WTC11 (cell line): ENCODE measurements at regions of chr5 and their contacts with region 1.

Region 1: GRCh38 chr5:141192110-141192732 is at the start of gene PCDHB10:
- DNase-seq: peak; percentile 89
- ATAC-seq: peak; percentile 88
- H3K4me3 Mint-ChIP-seq: peak within 1 kb of the TSS; percentile 58
- H3K27ac Mint-ChIP-seq: no peak within 1 kb of the TSS
- H3K4me1 Mint-ChIP-seq: peaks cover 4% of the 10 kb centered on the region
- H3K27me3 Mint-ChIP-seq: peaks cover 4% of the 10 kb centered on the region
- CTCF ChIP-seq: peak; percentile 70; the same call in 1 of the 2 replicates
- total RNA-seq, gene PCDHB10: 1.4 to 1.9 TPM (median 1.7 TPM) in 3 replicates

Region 2: DNA sequence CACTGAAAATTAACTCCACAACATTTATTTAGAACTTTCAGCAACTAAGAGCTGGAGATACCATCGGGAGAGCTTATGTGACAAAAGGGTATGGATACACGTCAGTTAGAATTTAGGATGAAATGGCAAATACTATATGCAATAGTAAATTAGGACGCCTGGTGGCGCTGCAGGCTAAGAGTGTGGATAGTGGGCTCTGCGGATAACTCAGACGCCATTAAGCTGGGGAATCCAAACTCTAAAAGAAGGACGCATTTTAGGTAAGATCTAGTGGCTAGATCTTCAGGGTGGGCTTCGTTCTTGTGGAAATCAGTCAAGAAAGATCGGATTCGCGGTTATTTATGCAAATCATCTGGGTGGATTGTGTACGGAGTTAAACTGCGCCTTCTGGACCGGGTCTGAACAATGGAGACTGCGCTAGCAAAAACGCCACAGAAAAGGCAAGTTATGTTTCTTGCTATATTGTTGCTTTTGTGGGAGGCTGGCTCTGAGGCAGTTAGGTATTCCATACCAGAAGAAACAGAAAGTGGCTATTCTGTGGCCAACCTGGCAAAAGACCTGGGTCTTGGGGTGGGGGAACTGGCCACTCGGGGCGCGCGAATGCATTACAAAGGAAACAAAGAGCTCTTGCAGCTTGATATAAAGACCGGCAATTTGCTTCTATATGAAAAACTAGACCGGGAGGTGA is 57.0 kb before region 1 on chr5 and contains the start of gene PCDHB5:
- CTCF ChIA-PET with region 1: interaction called, 13 read pairs
- POLR2A ChIA-PET with region 1: no interaction called
- DNase-seq: peak; percentile 72
- ATAC-seq: peak; percentile 89
- H3K4me3 Mint-ChIP-seq: peak within 1 kb of the TSS; percentile 74
- H3K27ac Mint-ChIP-seq: peak within 1 kb of the TSS; percentile 64; the same call in 1 of the 2 replicates
- H3K4me1 Mint-ChIP-seq: peaks cover 4% of the 10 kb centered on the region; the same call in 1 of the 2 replicates
- H3K27me3 Mint-ChIP-seq: no peaks in the 10 kb centered on the region
- CTCF ChIP-seq: peak; percentile 72
- total RNA-seq, gene PCDHB5: 6.8 to 12.5 TPM (median 8.5 TPM) in 3 replicates

Region 3: GRCh38 chr5:141172378-141173204 is 19.6 kb before region 1 on chr5 and contains the start of gene PCDHB7:
- CTCF ChIA-PET with region 1: interaction called, 12 read pairs
- POLR2A ChIA-PET with region 1: no interaction called
- DNase-seq: peak; percentile 57
- ATAC-seq: no peak
- H3K4me3 Mint-ChIP-seq: no peak within 1 kb of the TSS
- H3K27ac Mint-ChIP-seq: no peak within 1 kb of the TSS
- H3K4me1 Mint-ChIP-seq: no peaks in the 10 kb centered on the region
- H3K27me3 Mint-ChIP-seq: peaks cover 3% of the 10 kb centered on the region; the same call in 1 of the 2 replicates
- CTCF ChIP-seq: peak; percentile 66
- total RNA-seq, gene PCDHB7: 0.17 to 0.27 TPM (median 0.23 TPM) in 3 replicates

Region 4: GRCh38 chr5:141208478-141208877 is 16.3 kb after region 1 on chr5 and contains the start of gene PCDHB12:
- CTCF ChIA-PET with region 1: interaction called, 16 read pairs
- POLR2A ChIA-PET with region 1: no interaction called
- DNase-seq: peak; percentile 54
- ATAC-seq: peak; percentile 73
- H3K4me3 Mint-ChIP-seq: peak within 1 kb of the TSS; percentile 72
- H3K27ac Mint-ChIP-seq: no peak within 1 kb of the TSS
- H3K4me1 Mint-ChIP-seq: peaks cover 4% of the 10 kb centered on the region
- H3K27me3 Mint-ChIP-seq: peaks cover 3% of the 10 kb centered on the region
- CTCF ChIP-seq: 0 out of 2 replicates have a peak, but pooled peaks have one; percentile 27
- total RNA-seq, gene PCDHB12: 2.7 to 3.1 TPM (median 3.1 TPM) in 3 replicates